ENCODE measurements at regions of chrX and their contacts with region 1.

Region 1: GRCh38 chrX:136519070-136519469 is 12.9 kb upstream of the VGLL1 start:
- DNase-seq: no peak
- ATAC-seq: no peak
- H3K4me3 ChIP-seq: no peak overlapping the region
- H3K4me3 Mint-ChIP-seq: no peak overlapping the region
- H3K27ac ChIP-seq: no peak overlapping the region
- H3K27ac Mint-ChIP-seq: no peak overlapping the region
- H3K4me1 ChIP-seq: no peaks in the 10 kb centered on the region
- H3K4me1 Mint-ChIP-seq: no peaks in the 10 kb centered on the region
- H3K27me3 ChIP-seq: no peaks in the 10 kb centered on the region
- H3K27me3 Mint-ChIP-seq: no peaks in the 10 kb centered on the region
- CTCF ChIP-seq: no peak

Region 2: GRCh38 chrX:136711147-136711546 is 192.1 kb after region 1 on chrX:
- CTCF ChIA-PET with region 1: no interaction called
- POLR2A ChIA-PET with region 1: no interaction called
- intact Hi-C with region 1: loop called in 1 of 2 experiments (anchors 10 kb)
- DNase-seq: peak in 5 of 14 experiments; percentile 8 to 50 (median 39)
- ATAC-seq: no peak
- H3K4me3 ChIP-seq: no peak overlapping the region
- H3K4me3 Mint-ChIP-seq: no peak overlapping the region
- H3K27ac ChIP-seq: peak overlapping the region in 1 of 2 donors; percentile 59
- H3K27ac Mint-ChIP-seq: peak overlapping the region; percentile 96
- H3K4me1 ChIP-seq: peaks cover 36% of the 10 kb centered on the region
- H3K4me1 Mint-ChIP-seq: peaks cover 50% of the 10 kb centered on the region
- H3K27me3 ChIP-seq: no peaks in the 10 kb centered on the region
- H3K27me3 Mint-ChIP-seq: no peaks in the 10 kb centered on the region
- CTCF ChIP-seq: no peak